Heart left ventricle (tissue), 16 donors: ENCODE measurements at regions of chr1 and their contacts with region 1.

Region 1: GRCh38 chr1:75233302-75233929 is 99.2 kb downstream of the LHX8 start:
- DNase-seq: no peak
- ATAC-seq: peak in 1 of 4 donors; percentile 73
- H3K4me3 ChIP-seq: no peak overlapping the region
- H3K27ac ChIP-seq: no peak overlapping the region
- H3K4me1 ChIP-seq: no peaks in the 10 kb centered on the region
- H3K27me3 ChIP-seq: peaks cover 0 to 10% (median 0%) of the 10 kb centered on the region in 9 donors
- CTCF ChIP-seq: peak; percentile 23 to 63 (median 48)
- POLR2A ChIP-seq: no peak

Region 2: GRCh38 chr1:75165264-75165663 is 68.2 kb before region 1 on chr1:
- intact Hi-C with region 1: no loop called
- DNase-seq: no peak
- ATAC-seq: no peak
- H3K4me3 ChIP-seq: no peak overlapping the region
- H3K27ac ChIP-seq: no peak overlapping the region
- H3K4me1 ChIP-seq: no peaks in the 10 kb centered on the region
- H3K27me3 ChIP-seq: peaks cover 0 to 9% (median 0%) of the 10 kb centered on the region in 9 donors
- CTCF ChIP-seq: no peak
- POLR2A ChIP-seq: no peak

Region 3: DNA sequence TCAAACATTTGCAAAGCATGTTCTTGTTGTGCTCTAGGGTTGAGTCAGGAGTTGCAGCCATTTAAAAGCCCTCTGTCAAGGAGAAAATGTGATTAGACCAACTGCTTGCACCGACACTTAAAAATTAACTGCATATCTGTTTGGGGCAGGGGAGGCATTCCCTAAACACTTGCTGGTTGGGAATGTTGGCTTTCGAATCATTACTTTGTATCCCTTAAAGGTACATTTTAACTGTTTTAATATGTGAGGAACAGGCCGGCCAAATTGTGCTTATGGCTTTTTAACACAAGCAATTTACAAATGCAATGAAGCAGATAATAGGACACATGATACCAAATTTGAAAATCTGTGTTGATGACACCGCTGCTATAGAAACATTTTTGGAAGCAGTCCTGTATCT is 59.9 kb after region 1 on chr1:
- intact Hi-C with region 1: loop called in 1 of 10 experiments (anchors 10 kb)
- DNase-seq: no peak
- ATAC-seq: no peak
- H3K4me3 ChIP-seq: no peak overlapping the region
- H3K27ac ChIP-seq: no peak overlapping the region
- H3K4me1 ChIP-seq: no peaks in the 10 kb centered on the region
- H3K27me3 ChIP-seq: peaks cover 0 to 3% (median 0%) of the 10 kb centered on the region in 9 donors
- CTCF ChIP-seq: no peak
- POLR2A ChIP-seq: no peak

Region 4: GRCh38 chr1:75625795-75626194 is 392.4 kb after region 1 on chr1:
- intact Hi-C with region 1: loop called in 1 of 10 experiments (anchors 10 kb)
- DNase-seq: no peak
- ATAC-seq: no peak
- H3K4me3 ChIP-seq: no peak overlapping the region
- H3K27ac ChIP-seq: no peak overlapping the region
- H3K4me1 ChIP-seq: no peaks in the 10 kb centered on the region
- H3K27me3 ChIP-seq: peaks cover 0 to 13% (median 0%) of the 10 kb centered on the region in 9 donors
- CTCF ChIP-seq: no peak
- POLR2A ChIP-seq: no peak